Gastrocnemius medialis (tissue), 4 donors: ENCODE measurements at regions of chr12 and their contacts with region 1.

Region 1: GRCh38 chr12:97308576-97309198 is 153.9 kb upstream of the RMST start:
- DNase-seq: no peak
- ATAC-seq: no peak
- H3K4me3 ChIP-seq: no peak overlapping the region
- H3K27ac ChIP-seq: no peak overlapping the region
- H3K4me1 ChIP-seq: peaks cover 0 to 4% of the 10 kb centered on the region in 2 donors
- H3K27me3 ChIP-seq: no peaks in the 10 kb centered on the region
- CTCF ChIP-seq: peak in 4 of 5 experiments; percentile 19 to 67 (median 54)
- POLR2A ChIP-seq: no peak

Region 2: DNA sequence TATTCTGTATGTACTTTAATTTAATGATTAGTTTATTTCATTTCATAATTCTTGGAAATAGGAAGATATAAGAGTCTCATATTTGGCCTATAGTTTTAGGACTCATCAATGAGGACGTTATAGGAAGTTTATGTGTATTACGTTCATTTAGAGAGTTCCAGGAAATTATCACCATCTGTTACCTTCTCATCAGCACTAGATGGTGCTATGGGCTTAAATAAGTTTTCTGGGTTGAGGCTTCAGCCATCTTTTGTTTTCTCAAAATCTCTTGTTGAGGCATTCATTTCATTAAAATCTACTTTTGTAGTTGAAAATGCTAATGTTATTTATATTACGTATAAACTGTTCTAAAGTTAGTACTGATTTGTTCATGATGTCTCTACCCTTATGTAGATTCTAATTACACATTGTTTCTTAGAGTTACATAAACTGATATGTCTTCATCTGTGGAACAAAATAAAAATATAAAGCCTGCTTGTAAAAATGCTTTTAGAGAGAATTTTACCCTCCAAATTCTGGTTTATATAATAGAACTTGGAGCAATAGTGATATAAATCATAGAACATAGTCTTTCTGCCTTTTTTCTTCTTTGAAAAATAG is 730.1 kb before region 1 on chr12:
- in situ Hi-C with region 1: loop called in 3 of 4 experiments (anchors 10 to 25 kb)
- intact Hi-C with region 1: loop called (anchors 5 kb)
- DNase-seq: no peak
- ATAC-seq: no peak
- H3K4me3 ChIP-seq: no peak overlapping the region
- H3K27ac ChIP-seq: no peak overlapping the region
- H3K4me1 ChIP-seq: no peaks in the 10 kb centered on the region
- H3K27me3 ChIP-seq: no peaks in the 10 kb centered on the region
- CTCF ChIP-seq: peak in 3 of 5 experiments; percentile 27 to 42 (median 35)
- POLR2A ChIP-seq: no peak

Region 3: DNA sequence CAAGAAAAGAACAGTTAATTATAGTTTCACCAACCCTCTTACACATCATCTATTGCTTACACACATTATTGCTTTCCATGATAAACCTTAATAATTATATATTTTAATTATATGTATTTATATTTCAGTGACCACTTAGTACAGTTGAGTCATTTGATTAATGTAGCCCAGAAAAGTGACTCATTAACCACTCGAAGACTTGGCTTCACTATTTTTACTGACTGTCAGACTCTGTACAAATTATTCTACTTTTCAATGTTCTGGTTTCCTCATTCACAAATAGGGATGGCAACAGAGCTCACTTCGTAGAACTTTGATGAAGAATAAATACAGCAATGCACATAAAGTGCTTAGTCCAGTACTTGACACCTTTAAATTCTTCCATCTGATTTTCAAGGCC is 721.0 kb before region 1 on chr12:
- in situ Hi-C with region 1: loop called in 3 of 4 experiments (anchors 10 to 25 kb)
- intact Hi-C with region 1: no loop called
- DNase-seq: no peak
- ATAC-seq: no peak
- H3K4me3 ChIP-seq: no peak overlapping the region
- H3K27ac ChIP-seq: no peak overlapping the region
- H3K4me1 ChIP-seq: no peaks in the 10 kb centered on the region
- H3K27me3 ChIP-seq: no peaks in the 10 kb centered on the region
- CTCF ChIP-seq: no peak
- POLR2A ChIP-seq: no peak

Region 4: GRCh38 chr12:97061171-97061570 is 247.5 kb before region 1 on chr12:
- in situ Hi-C with region 1: no loop called
- intact Hi-C with region 1: no loop called
- DNase-seq: no peak
- ATAC-seq: no peak
- H3K4me3 ChIP-seq: no peak overlapping the region
- H3K27ac ChIP-seq: no peak overlapping the region
- H3K4me1 ChIP-seq: no peaks in the 10 kb centered on the region
- H3K27me3 ChIP-seq: no peaks in the 10 kb centered on the region
- CTCF ChIP-seq: no peak
- POLR2A ChIP-seq: no peak

Region 5: GRCh38 chr12:97321621-97322020 is 12.9 kb after region 1 on chr12:
- in situ Hi-C with region 1: no loop called
- intact Hi-C with region 1: no loop called
- DNase-seq: no peak
- ATAC-seq: no peak
- H3K4me3 ChIP-seq: no peak overlapping the region
- H3K27ac ChIP-seq: no peak overlapping the region
- H3K4me1 ChIP-seq: no peaks in the 10 kb centered on the region
- H3K27me3 ChIP-seq: no peaks in the 10 kb centered on the region
- CTCF ChIP-seq: no peak
- POLR2A ChIP-seq: no peak

Region 6: GRCh38 chr12:97404543-97404942 is 95.9 kb after region 1 on chr12:
- in situ Hi-C with region 1: no loop called
- intact Hi-C with region 1: no loop called
- DNase-seq: no peak
- ATAC-seq: no peak
- H3K4me3 ChIP-seq: no peak overlapping the region
- H3K27ac ChIP-seq: no peak overlapping the region
- H3K4me1 ChIP-seq: no peaks in the 10 kb centered on the region
- H3K27me3 ChIP-seq: no peaks in the 10 kb centered on the region
- CTCF ChIP-seq: peak in 2 of 5 experiments; percentile 31 to 44
- POLR2A ChIP-seq: no peak

Region 7: GRCh38 chr12:98998697-98999299 is 1690.1 kb after region 1 on chr12:
- in situ Hi-C with region 1: no loop called
- intact Hi-C with region 1: no loop called
- DNase-seq: no peak
- ATAC-seq: peak; percentile 45 to 69
- H3K4me3 ChIP-seq: no peak overlapping the region
- H3K27ac ChIP-seq: no peak overlapping the region
- H3K4me1 ChIP-seq: no peaks in the 10 kb centered on the region
- H3K27me3 ChIP-seq: no peaks in the 10 kb centered on the region
- CTCF ChIP-seq: peak; percentile 29 to 64 (median 51)
- POLR2A ChIP-seq: no peak